HEK293T (cell line): ENCODE measurements at regions of chr1 and their contacts with region 1.

Region 1: DNA sequence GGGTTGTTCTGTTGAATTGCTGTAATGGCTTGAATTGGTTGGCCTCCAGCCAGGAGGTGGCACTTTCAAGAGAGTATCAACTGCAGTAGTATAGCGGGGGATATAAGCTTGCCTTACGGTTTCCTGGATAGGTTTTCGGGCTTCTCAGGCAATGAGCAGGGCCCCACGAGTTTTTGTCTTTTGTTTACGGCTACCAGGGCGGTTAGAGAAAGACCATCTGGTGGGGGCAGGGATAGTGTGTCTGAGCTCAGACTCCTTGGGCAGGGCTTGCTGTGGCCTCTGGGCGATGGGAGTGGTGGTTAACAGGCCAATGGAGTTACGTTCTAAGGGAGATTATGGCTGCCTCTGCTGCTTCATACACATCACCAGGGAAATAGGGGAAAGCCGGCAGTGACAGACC is 62.8 kb downstream of the DTL start:
- DNase-seq: no peak

Region 2: GRCh38 chr1:211476200-211476849 is 622.0 kb before region 1 on chr1:
- CTCF ChIA-PET with region 1: interaction called, 14 read pairs
- POLR2A ChIA-PET with region 1: no interaction called
- DNase-seq: peak; percentile 79